ENCODE measurements at regions of chr2 and their contacts with region 1.

Region 1: DNA sequence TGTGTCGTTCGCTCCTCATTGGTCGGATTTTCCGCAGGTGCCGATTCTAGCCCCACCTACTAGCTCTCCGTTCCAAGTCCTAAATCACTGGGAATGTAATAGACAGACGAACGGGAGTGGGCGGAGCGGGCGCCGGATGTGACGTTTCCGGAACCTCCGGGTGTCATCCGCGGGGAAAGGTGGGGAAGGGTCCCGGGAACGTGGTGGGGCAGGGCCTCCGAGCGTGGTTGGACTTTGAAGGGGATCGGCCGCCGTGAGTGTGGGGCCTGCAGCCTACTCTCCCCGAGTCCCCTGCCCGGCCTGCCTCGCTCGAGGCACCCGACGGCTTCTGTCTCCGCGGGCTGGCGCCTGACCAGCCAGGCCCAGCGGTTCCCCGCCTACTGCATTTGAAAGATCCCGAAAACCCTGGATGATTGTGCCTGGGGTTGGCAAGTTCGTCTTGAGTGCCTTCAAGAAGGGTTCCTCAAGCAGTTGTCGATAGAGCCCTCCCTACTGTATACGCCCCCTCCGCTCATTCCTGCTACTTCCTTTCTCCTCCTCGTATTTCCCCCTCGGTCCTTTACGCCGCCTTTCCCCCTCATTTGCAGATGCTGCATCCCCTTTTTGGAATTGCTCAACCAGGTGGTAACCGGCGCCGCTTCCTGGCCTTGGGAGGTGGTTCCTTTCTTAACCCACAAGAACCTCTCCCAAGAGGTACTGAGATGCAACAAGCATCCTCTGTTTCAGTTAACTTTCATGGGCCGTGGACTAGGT is at the start of gene STAMBP:
- DNase-seq: peak; percentile 68 to 97 (median 91)
- ATAC-seq: peak; percentile 83
- H3K4me3 ChIP-seq: peak within 1 kb of the TSS; percentile 73 to 78
- H3K4me3 Mint-ChIP-seq: peak within 1 kb of the TSS; percentile 97
- H3K27ac ChIP-seq: peak within 1 kb of the TSS; percentile 74 to 96
- H3K27ac Mint-ChIP-seq: peak within 1 kb of the TSS; percentile 99
- H3K4me1 ChIP-seq: peaks cover 33% of the 10 kb centered on the region
- H3K4me1 Mint-ChIP-seq: peaks cover 53% of the 10 kb centered on the region
- H3K27me3 ChIP-seq: no peaks in the 10 kb centered on the region
- H3K27me3 Mint-ChIP-seq: no peaks in the 10 kb centered on the region
- CTCF ChIP-seq: no peak
- total RNA-seq, gene STAMBP: 8.6 to 9.2 TPM

Region 2: GRCh38 chr2:73685770-73686438 is 143.1 kb before region 1 on chr2:
- CTCF ChIA-PET with region 1: no interaction called
- POLR2A ChIA-PET with region 1: no interaction called
- intact Hi-C with region 1: no loop called
- DNase-seq: no peak
- ATAC-seq: no peak
- H3K4me3 ChIP-seq: no peak overlapping the region
- H3K4me3 Mint-ChIP-seq: no peak overlapping the region
- H3K27ac ChIP-seq: no peak overlapping the region
- H3K27ac Mint-ChIP-seq: no peak overlapping the region
- H3K4me1 ChIP-seq: no peaks in the 10 kb centered on the region
- H3K4me1 Mint-ChIP-seq: no peaks in the 10 kb centered on the region
- H3K27me3 ChIP-seq: no peaks in the 10 kb centered on the region
- H3K27me3 Mint-ChIP-seq: peaks cover 2% of the 10 kb centered on the region
- CTCF ChIP-seq: no peak

Region 3: GRCh38 chr2:73779467-73780236 is 49.3 kb before region 1 on chr2 and contains the start of gene DUSP11:
- CTCF ChIA-PET with region 1: interaction called, 4 read pairs
- POLR2A ChIA-PET with region 1: no interaction called
- intact Hi-C with region 1: loop called in 1 of 2 experiments (anchors 1 kb)
- DNase-seq: peak; percentile 93 to 98 (median 96)
- ATAC-seq: peak; percentile 99
- H3K4me3 ChIP-seq: peak within 1 kb of the TSS; percentile 90 to 97
- H3K4me3 Mint-ChIP-seq: peak within 1 kb of the TSS; percentile 97
- H3K27ac ChIP-seq: peak within 1 kb of the TSS; percentile 87 to 93
- H3K27ac Mint-ChIP-seq: peak within 1 kb of the TSS; percentile 99
- H3K4me1 ChIP-seq: peaks cover 21% of the 10 kb centered on the region
- H3K4me1 Mint-ChIP-seq: peaks cover 39% of the 10 kb centered on the region
- H3K27me3 ChIP-seq: no peaks in the 10 kb centered on the region
- H3K27me3 Mint-ChIP-seq: peaks cover 5% of the 10 kb centered on the region
- CTCF ChIP-seq: peak; percentile 95
- total RNA-seq, gene DUSP11: 66.7 to 67.0 TPM

Region 4: GRCh38 chr2:73926493-73927338 is 97.7 kb after region 1 on chr2 and contains the start of gene DGUOK:
- CTCF ChIA-PET with region 1: no interaction called
- POLR2A ChIA-PET with region 1: no interaction called
- intact Hi-C with region 1: loop called (anchors 1 to 2 kb)
- DNase-seq: peak; percentile 90 to 100 (median 96)
- ATAC-seq: peak; percentile 96
- H3K4me3 ChIP-seq: peak within 1 kb of the TSS; percentile 70 to 72
- H3K4me3 Mint-ChIP-seq: peak within 1 kb of the TSS; percentile 88
- H3K27ac ChIP-seq: peak within 1 kb of the TSS; percentile 94
- H3K27ac Mint-ChIP-seq: peak within 1 kb of the TSS; percentile 99
- H3K4me1 ChIP-seq: peaks cover 45% of the 10 kb centered on the region
- H3K4me1 Mint-ChIP-seq: peaks cover 52% of the 10 kb centered on the region
- H3K27me3 ChIP-seq: no peaks in the 10 kb centered on the region
- H3K27me3 Mint-ChIP-seq: no peaks in the 10 kb centered on the region
- CTCF ChIP-seq: no peak
- total RNA-seq, gene DGUOK: 29.0 to 31.8 TPM

Region 5: GRCh38 chr2:74119912-74120825 is 291.2 kb after region 1 on chr2:
- CTCF ChIA-PET with region 1: interaction called, 6 read pairs
- POLR2A ChIA-PET with region 1: no interaction called
- intact Hi-C with region 1: loop called (anchors 1 kb)
- DNase-seq: peak; percentile 76 to 92 (median 83)
- ATAC-seq: peak; percentile 97
- H3K4me3 ChIP-seq: peak overlapping the region; percentile 94 to 96
- H3K4me3 Mint-ChIP-seq: peak overlapping the region; percentile 84
- H3K27ac ChIP-seq: peak overlapping the region; percentile 82 to 95
- H3K27ac Mint-ChIP-seq: peak overlapping the region; percentile 92
- H3K4me1 ChIP-seq: peaks cover 8% of the 10 kb centered on the region
- H3K4me1 Mint-ChIP-seq: peaks cover 7% of the 10 kb centered on the region
- H3K27me3 ChIP-seq: peaks cover 0 to 4% of the 10 kb centered on the region in 2 experiments
- H3K27me3 Mint-ChIP-seq: peaks cover 4% of the 10 kb centered on the region
- CTCF ChIP-seq: peak; percentile 47

Region 6: DNA sequence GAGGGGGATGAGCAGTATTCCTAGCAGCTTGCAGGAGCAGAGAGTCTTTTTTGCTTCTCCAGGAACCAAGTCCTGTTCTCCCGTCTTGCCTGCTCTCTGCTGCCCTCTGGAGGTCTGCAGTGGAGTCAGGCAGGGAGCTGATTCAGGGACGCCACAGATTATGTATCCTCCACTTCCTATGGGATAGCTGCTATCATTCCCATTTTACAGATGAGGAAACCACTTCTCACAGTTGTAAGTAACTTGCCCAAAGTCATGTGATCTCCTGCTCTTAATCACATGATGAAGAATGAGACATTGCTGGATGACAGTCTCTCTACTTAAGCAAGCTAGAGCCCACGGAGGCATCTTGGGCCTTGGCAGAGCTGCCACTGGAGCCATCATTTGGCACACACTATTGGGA is 505.9 kb after region 1 on chr2:
- CTCF ChIA-PET with region 1: interaction called, 93 read pairs
- POLR2A ChIA-PET with region 1: interaction called, 3 read pairs
- intact Hi-C with region 1: loop called in 1 of 2 experiments (anchors 1 kb)
- DNase-seq: peak; percentile 52 to 84 (median 77)
- ATAC-seq: peak; percentile 85
- H3K4me3 ChIP-seq: no peak overlapping the region
- H3K4me3 Mint-ChIP-seq: no peak overlapping the region
- H3K27ac ChIP-seq: no peak overlapping the region
- H3K27ac Mint-ChIP-seq: no peak overlapping the region
- H3K4me1 ChIP-seq: no peaks in the 10 kb centered on the region
- H3K4me1 Mint-ChIP-seq: peaks cover 3% of the 10 kb centered on the region
- H3K27me3 ChIP-seq: no peaks in the 10 kb centered on the region
- H3K27me3 Mint-ChIP-seq: no peaks in the 10 kb centered on the region
- CTCF ChIP-seq: peak; percentile 94

Measured in CD8-positive, alpha-beta T cell (primary cell).